Activated CD4-positive, alpha-beta T cell treated with anti-CD3 and anti-CD28 coated beads, Interleukin-2, amount 10 ng/mL, durations not matched to agents 7 days and 5 days (primary cell): ENCODE measurements at regions of chr14 and their contacts with region 1.

Region 1: GRCh38 chr14:100653409-100653808 is 66.2 kb upstream of the BEGAIN start:
- DNase-seq: peak; percentile 33
- H3K4me3 Mint-ChIP-seq: no peak overlapping the region
- H3K27ac Mint-ChIP-seq: no peak overlapping the region
- H3K4me1 Mint-ChIP-seq: peaks cover 2% of the 10 kb centered on the region
- H3K27me3 Mint-ChIP-seq: peaks cover 21% of the 10 kb centered on the region

Region 2: GRCh38 chr14:100383727-100384158 is 269.7 kb before region 1 on chr14:
- CTCF ChIA-PET with region 1: interaction called, 16 read pairs
- POLR2A ChIA-PET with region 1: no interaction called
- DNase-seq: peak; percentile 73
- H3K4me3 Mint-ChIP-seq: no peak overlapping the region
- H3K27ac Mint-ChIP-seq: no peak overlapping the region
- H3K4me1 Mint-ChIP-seq: peaks cover 15% of the 10 kb centered on the region
- H3K27me3 Mint-ChIP-seq: no peaks in the 10 kb centered on the region